ENCODE measurements at regions of chr1 and their contacts with region 1.

Region 1: GRCh38 chr1:15526490-15527339 is at the start of gene DNAJC16:
- DNase-seq: peak; percentile 100
- H3K4me3 ChIP-seq: peak within 1 kb of the TSS; percentile 52 to 87 (median 74)
- H3K27ac ChIP-seq: peak within 1 kb of the TSS; percentile 44
- H3K4me1 ChIP-seq: peaks cover 24% of the 10 kb centered on the region
- H3K27me3 ChIP-seq: no peaks in the 10 kb centered on the region
- CTCF ChIP-seq: peak in 1 of 2 donors; percentile 4
- POLR2A ChIP-seq: peak; percentile 90
- total RNA-seq, gene DNAJC16: 21.4 and 23.3 TPM in 2 replicates

Region 2: GRCh38 chr1:15603050-15603965 is 76.6 kb after region 1 on chr1:
- CTCF ChIA-PET with region 1: no interaction called
- POLR2A ChIA-PET with region 1: no interaction called
- dilution Hi-C with region 1: no loop called
- intact Hi-C with region 1: loop called (anchors 1 kb)
- DNase-seq: peak; percentile 95
- H3K4me3 ChIP-seq: peak overlapping the region; percentile 34 to 54 (median 54)
- H3K27ac ChIP-seq: no peak overlapping the region
- H3K4me1 ChIP-seq: peaks cover 8% of the 10 kb centered on the region
- H3K27me3 ChIP-seq: peaks cover 2% of the 10 kb centered on the region in 2 experiments
- CTCF ChIP-seq: no peak
- POLR2A ChIP-seq: peak; percentile 83

Region 3: DNA sequence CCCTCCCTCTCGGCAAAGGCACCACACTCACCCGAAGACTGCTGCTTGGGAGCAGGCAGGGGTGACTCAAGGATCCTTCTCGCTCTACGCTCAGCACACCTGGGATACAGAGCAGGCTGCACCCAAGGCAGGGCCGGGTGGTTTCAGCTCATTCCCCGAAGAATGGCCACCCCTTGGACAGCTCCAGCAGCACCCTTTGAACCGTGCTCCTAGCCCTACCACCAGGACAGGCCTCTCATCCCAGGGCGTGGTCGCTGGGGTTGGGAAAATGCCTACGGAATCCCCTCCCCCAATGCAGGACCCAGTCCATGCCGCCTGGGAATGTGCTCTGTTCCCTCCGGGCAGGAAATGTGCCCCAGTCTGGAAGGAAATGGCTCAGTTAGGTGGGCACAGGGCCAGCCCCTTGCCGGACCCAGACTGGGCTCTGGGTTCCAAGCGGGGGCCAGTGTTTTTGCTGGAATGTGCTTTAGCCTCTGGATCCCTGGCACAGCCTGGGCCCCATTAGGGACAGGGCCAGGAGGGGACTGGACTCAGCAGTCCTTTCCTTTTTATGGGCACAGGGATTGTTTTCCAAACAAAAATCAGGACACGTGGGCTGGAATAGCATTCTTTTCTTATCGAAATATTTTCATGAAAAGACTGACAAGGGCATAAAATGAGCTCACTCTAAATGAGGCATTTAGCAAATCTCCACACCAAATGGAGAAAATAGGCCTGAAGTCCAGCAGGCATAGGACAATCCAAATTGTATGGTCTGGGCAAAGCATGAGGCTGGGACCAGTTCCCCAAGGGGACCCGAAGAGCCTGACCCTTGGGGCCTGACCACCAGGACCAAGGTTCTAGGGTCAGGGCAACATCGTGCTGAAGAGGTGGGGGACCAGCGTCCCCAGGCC is 222.9 kb after region 1 on chr1:
- CTCF ChIA-PET with region 1: no interaction called
- POLR2A ChIA-PET with region 1: no interaction called
- dilution Hi-C with region 1: no loop called
- intact Hi-C with region 1: loop called (anchors 2 kb)
- DNase-seq: peak; percentile 92
- H3K4me3 ChIP-seq: peak overlapping the region in 2 of 3 experiments; percentile 26 to 74
- H3K27ac ChIP-seq: peak overlapping the region; percentile 97
- H3K4me1 ChIP-seq: peaks cover 35% of the 10 kb centered on the region
- H3K27me3 ChIP-seq: no peaks in the 10 kb centered on the region
- CTCF ChIP-seq: no peak
- POLR2A ChIP-seq: peak; percentile 63